Right cardiac atrium (tissue), 5 donors: ENCODE measurements at regions of chr1 and their contacts with region 1.

Region 1: DNA sequence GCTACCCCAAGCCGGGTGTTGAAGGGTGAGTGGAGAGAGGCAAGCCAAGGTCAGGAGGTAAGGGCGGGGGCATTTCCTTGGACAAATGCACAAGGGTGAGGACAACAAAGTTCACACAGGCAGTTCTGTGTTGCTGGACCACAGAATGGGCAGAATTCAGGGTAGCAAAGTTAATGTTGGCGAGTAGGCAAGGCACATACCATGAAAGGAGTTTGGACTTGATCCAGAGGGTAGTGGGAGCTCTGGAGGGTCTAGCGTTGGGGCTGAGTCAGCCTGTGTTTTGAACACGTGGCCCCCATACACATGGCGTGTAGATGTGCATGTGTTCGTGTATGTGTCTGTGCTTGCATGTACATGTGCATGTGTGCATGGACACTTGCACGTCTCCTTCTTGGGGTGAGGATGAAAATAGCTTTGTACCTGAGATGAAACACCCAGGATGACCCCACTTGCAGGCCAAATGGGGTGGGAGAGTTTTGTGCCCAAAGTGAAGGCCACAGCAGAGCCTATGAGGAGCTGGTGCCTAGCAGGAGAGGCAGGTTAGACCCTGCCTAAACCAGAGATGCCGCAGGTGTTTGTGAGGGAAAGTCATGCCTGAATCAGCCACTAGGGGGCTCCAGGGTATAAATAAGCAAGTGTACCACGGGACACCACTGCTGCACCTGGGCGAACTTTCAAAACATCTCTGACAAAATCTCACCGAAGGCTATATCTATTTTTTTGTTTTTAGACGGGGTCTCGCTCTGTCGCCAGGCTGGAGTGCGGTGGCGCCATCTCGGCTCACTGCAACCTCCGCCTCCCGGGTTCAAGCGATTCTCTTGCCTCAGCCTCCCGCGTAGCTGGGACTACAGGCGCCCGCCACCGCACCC is 21.8 kb downstream of the SLC27A3 start:
- DNase-seq: peak; percentile 75 to 91 (median 79)
- ATAC-seq: peak; percentile 43 to 47
- H3K4me3 ChIP-seq: no peak overlapping the region
- H3K27ac ChIP-seq: no peak overlapping the region
- H3K4me1 ChIP-seq: no peaks in the 10 kb centered on the region
- H3K27me3 ChIP-seq: no peaks in the 10 kb centered on the region

Region 2: GRCh38 chr1:153639280-153639679 is 157.7 kb before region 1 on chr1:
- intact Hi-C with region 1: no loop called
- DNase-seq: no peak
- ATAC-seq: peak in 1 of 2 donors; percentile 61
- H3K4me3 ChIP-seq: no peak overlapping the region
- H3K27ac ChIP-seq: peak overlapping the region; percentile 53
- H3K4me1 ChIP-seq: peaks cover 8% of the 10 kb centered on the region
- H3K27me3 ChIP-seq: no peaks in the 10 kb centered on the region

Region 3: GRCh38 chr1:153922972-153923925 is 126.2 kb after region 1 on chr1 and contains the start of gene GATAD2B:
- intact Hi-C with region 1: loop called in 1 of 4 experiments (anchors 10 kb)
- DNase-seq: peak; percentile 100
- ATAC-seq: peak; percentile 98
- H3K4me3 ChIP-seq: peak within 1 kb of the TSS; percentile 87
- H3K27ac ChIP-seq: peak within 1 kb of the TSS; percentile 82
- H3K4me1 ChIP-seq: peaks cover 11% of the 10 kb centered on the region
- H3K27me3 ChIP-seq: no peaks in the 10 kb centered on the region
- total RNA-seq, gene GATAD2B: 35.8 to 50.1 (median 42.6) TPM

Region 4: GRCh38 chr1:153985941-153986761 is 189.1 kb after region 1 on chr1 and contains the start of gene RAB13:
- intact Hi-C with region 1: loop called (anchors 2 to 10 kb)
- DNase-seq: peak; percentile 92 to 96 (median 94)
- ATAC-seq: peak; percentile 90 to 92
- H3K4me3 ChIP-seq: peak within 1 kb of the TSS; percentile 60
- H3K27ac ChIP-seq: peak within 1 kb of the TSS; percentile 98
- H3K4me1 ChIP-seq: peaks cover 3% of the 10 kb centered on the region
- H3K27me3 ChIP-seq: no peaks in the 10 kb centered on the region
- total RNA-seq, gene RAB13: 62.2 to 78.2 (median 69.5) TPM

Region 5: GRCh38 chr1:154183045-154183915 is 386.3 kb after region 1 on chr1:
- intact Hi-C with region 1: no loop called
- DNase-seq: peak; percentile 96 to 98 (median 98)
- ATAC-seq: peak; percentile 95 to 96
- H3K4me3 ChIP-seq: peak overlapping the region; percentile 82
- H3K27ac ChIP-seq: peak overlapping the region; percentile 82
- H3K4me1 ChIP-seq: peaks cover 9% of the 10 kb centered on the region
- H3K27me3 ChIP-seq: no peaks in the 10 kb centered on the region